Calu3 (cell line): ENCODE measurements at regions of chr5 and their contacts with region 1.

Region 1: DNA sequence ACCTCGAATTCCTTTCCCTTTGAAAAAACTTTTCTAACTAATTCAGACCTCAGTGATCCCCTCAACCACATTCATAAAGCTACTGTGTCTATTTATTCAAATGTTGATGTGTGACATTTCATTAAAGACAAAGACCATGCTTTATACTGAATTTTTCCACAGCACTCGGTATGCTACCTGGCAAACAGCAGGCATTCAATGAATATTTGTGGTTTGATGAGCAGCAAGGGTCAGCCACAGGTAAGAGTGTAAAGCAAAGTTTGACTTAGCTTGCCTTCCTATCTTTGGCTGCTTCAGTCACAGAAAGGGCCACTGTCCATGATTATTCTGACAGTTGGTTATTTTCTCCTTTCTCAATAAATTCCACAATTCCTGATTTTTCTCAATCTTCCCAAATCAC is 5.1 kb upstream of the CDC42SE2 start:
- DNase-seq: peak; percentile 63
- H3K4me3 Mint-ChIP-seq: peak overlapping the region; percentile 39
- H3K27ac Mint-ChIP-seq: peak overlapping the region; percentile 79
- H3K4me1 Mint-ChIP-seq: peaks cover 25% of the 10 kb centered on the region
- H3K27me3 Mint-ChIP-seq: no peaks in the 10 kb centered on the region
- CTCF ChIP-seq: no peak

Region 2: DNA sequence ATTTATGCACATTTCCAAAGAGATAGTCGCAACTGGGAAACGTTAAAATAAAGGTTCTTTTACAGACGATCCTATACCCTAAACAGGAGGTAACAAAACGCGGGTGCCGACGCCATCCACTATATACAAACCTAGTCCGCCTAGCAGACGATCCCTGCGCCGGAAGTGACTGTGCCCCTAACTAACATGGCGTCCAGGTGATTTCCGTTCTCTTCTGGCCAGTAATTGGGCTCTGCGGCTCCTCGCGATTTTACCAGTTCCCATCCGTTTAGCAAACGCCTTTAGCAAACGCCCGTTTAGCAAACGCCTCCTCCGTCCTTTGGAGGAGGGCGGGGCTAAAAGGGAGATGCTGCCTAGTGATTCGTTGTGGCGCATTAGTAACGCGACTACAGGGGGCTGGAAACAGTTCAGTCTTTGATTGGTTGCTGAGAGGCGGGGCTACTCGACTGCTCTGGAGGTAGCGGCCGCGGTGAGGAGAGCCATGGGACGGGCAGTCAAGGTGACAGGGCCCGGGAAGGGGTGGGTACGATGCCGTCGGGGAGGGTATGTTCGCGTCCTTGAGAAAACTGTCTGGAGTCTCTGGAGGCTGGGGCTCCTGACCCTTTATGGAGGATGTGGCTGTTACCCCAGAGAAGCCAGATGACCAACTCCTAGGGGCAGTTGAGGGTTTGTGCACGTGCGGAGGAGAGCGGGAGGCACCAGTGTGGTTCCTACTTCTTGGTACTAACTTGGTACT is 88.0 kb before region 1 on chr5 and contains the start of gene LYRM7:
- CTCF ChIA-PET with region 1: interaction called, 9 read pairs
- intact Hi-C with region 1: loop called (anchors 1 kb)
- DNase-seq: peak; percentile 97
- H3K4me3 Mint-ChIP-seq: peak within 1 kb of the TSS; percentile 92
- H3K27ac Mint-ChIP-seq: peak within 1 kb of the TSS; percentile 79
- H3K4me1 Mint-ChIP-seq: peaks cover 19% of the 10 kb centered on the region
- H3K27me3 Mint-ChIP-seq: no peaks in the 10 kb centered on the region
- CTCF ChIP-seq: no peak
- total RNA-seq, gene LYRM7: 12.6 and 14.6 TPM in 2 replicates